Mucosa of descending colon (tissue), 3 donors: ENCODE measurements at regions of chr2 and their contacts with region 1.

Region 1: DNA sequence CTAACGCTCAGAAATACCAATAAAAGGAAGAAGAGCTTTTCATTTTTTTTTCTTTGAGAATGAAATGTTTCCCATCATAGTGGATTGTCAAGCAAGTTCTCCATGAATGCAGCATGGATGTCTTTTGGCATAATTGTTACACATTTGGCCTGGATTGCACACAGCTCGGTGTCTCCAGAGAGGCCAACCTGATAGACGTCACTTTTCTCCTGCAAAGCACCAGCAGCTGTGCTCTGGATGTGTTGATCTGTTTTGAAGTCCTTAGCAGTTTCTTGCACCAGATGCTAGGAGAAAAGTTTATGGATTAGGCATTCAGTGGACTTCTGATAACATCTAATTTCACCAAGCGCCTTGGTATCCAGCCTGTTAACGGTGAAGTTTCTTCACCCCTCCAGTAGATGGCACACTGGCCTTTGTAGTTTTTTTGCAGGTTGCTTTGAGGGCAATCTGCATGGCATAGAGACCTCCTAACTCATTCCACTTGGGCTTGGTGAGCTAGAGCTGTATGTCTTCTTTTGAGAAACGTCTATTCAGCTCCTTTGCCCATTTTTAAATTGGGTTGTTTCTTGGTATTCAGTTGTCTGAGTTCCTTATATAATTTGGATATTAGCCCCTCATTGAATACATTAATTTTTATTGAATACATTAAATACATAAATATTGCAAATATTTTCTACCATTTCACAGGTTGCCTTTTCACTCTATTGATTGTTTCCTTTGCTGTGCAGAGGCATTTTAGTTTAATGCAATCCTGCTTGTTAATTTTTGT is 59.7 kb downstream of the PTH2R start:
- DNase-seq: peak in 1 of 3 donors; percentile 33
- ATAC-seq: peak; percentile 68
- H3K4me3 ChIP-seq: no peak overlapping the region
- H3K4me1 ChIP-seq: no peaks in the 10 kb centered on the region
- CTCF ChIP-seq: peak; percentile 41

Region 2: DNA sequence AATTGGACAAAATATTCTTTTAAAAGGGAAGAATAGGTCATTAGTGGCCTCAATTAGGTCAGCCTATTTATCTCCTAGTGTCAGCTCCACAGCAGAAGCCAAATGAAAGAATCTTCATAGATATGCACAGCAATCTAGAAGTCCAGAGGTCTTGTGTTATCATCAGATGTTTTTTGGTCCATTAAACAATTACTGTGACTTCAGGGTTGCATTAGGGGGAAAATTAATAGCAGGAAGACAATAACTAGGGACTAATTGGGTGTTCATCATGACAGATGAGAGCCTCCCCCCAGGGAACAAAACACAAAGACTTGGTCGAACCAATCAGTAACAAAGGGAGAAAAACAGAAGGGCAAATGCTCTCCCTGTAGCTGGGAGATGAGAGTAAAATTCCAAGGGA is 204.9 kb after region 1 on chr2:
- intact Hi-C with region 1: no loop called
- DNase-seq: no peak
- ATAC-seq: no peak
- H3K4me3 ChIP-seq: no peak overlapping the region
- H3K4me1 ChIP-seq: no peaks in the 10 kb centered on the region
- CTCF ChIP-seq: no peak

Region 3: GRCh38 chr2:208783187-208783586 is 316.9 kb after region 1 on chr2:
- intact Hi-C with region 1: loop called in 1 of 2 experiments (anchors 5 kb)
- DNase-seq: peak in 1 of 3 donors; percentile 36
- ATAC-seq: no peak
- H3K4me3 ChIP-seq: no peak overlapping the region
- H3K4me1 ChIP-seq: no peaks in the 10 kb centered on the region
- CTCF ChIP-seq: no peak